Activated CD4-positive, alpha-beta memory T cell treated with anti-CD3 and anti-CD28 coated beads, Interleukin-2, amount 10 ng/mL, durations not matched to agents 7 days and 5 days (primary cell): ENCODE measurements at regions of chr22 and their contacts with region 1.

Region 1: GRCh38 chr22:49880281-49880680 is 26.6 kb downstream of the ZBED4 start:
- DNase-seq: peak; percentile 42
- H3K4me3 Mint-ChIP-seq: peak overlapping the region; percentile 33
- H3K27ac Mint-ChIP-seq: peak overlapping the region; percentile 67
- H3K4me1 Mint-ChIP-seq: peaks cover 36% of the 10 kb centered on the region
- H3K27me3 Mint-ChIP-seq: no peaks in the 10 kb centered on the region

Region 2: GRCh38 chr22:49867303-49868265 is 12.7 kb before region 1 on chr22:
- CTCF ChIA-PET with region 1: no interaction called
- POLR2A ChIA-PET with region 1: interaction called, 10 read pairs
- DNase-seq: no peak
- H3K4me3 Mint-ChIP-seq: no peak overlapping the region
- H3K27ac Mint-ChIP-seq: peak overlapping the region; percentile 77
- H3K4me1 Mint-ChIP-seq: peaks cover 70% of the 10 kb centered on the region
- H3K27me3 Mint-ChIP-seq: no peaks in the 10 kb centered on the region